GM10248 (cell line): ENCODE measurements at regions of chr12 and their contacts with region 1.

Region 1: DNA sequence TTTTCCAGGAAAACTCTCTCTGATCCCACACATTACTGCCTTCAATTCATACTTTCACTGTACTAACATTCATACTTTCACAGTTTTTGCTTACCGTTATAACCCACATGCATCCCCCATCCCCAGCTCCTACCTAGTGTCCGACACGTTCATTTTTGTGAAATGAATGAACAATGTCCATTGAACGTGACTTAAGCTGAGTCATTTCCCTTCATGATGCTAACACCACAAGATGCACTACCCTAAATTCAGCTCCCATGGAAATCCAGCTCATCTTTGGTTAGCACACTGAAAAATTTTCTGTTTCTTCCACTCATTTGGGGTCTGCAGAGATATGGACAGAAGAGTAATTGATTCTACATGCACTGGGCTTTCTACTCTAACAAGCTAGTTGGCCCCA is 84.7 kb downstream of the GALNT4 start:
- DNase-seq: no peak
- CTCF ChIP-seq: no peak

Region 2: GRCh38 chr12:89427508-89428156 is 12.3 kb before region 1 on chr12:
- CTCF ChIA-PET with region 1: interaction called, 15 read pairs
- POLR2A ChIA-PET with region 1: no interaction called
- DNase-seq: peak; percentile 18
- CTCF ChIP-seq: no peak